MCF 10A (cell line): ENCODE measurements at regions of chr3 and their contacts with region 1.

Region 1: GRCh38 chr3:156816800-156817645 is 9.1 kb upstream of the LEKR1 start:
- DNase-seq: peak; percentile 86
- H3K4me3 Mint-ChIP-seq: peak overlapping the region; percentile 82
- H3K27ac Mint-ChIP-seq: peak overlapping the region; percentile 95
- H3K4me1 Mint-ChIP-seq: peaks cover 41% of the 10 kb centered on the region
- H3K27me3 Mint-ChIP-seq: no peaks in the 10 kb centered on the region
- CTCF ChIP-seq: no peak

Region 2: GRCh38 chr3:156681002-156681401 is 136.0 kb before region 1 on chr3:
- CTCF ChIA-PET with region 1: interaction called, 4 read pairs
- POLR2A ChIA-PET with region 1: interaction called, 103 read pairs
- intact Hi-C with region 1: loop called (anchors 1 kb)
- DNase-seq: peak; percentile 90
- H3K4me3 Mint-ChIP-seq: peak overlapping the region; percentile 43
- H3K27ac Mint-ChIP-seq: peak overlapping the region; percentile 91
- H3K4me1 Mint-ChIP-seq: peaks cover 56% of the 10 kb centered on the region
- H3K27me3 Mint-ChIP-seq: no peaks in the 10 kb centered on the region
- CTCF ChIP-seq: no peak

Region 3: DNA sequence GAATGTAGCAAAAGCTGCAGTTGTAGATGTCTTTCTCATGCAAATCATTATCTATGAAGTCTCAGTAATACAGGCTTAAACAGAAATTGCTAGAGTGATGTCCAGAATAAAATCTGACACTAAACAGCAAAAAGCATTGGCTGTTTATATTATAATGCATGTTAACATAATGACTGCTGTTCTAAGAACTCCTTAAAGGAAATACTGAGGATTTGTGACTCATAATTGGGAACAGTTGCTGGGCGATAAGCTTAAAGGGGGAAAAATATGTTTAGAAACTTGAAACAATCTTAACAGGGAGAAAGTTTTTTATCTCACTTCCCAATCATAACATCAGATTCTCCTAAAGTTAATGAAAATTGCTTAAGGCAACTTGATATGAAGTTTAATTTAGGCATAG is 125.1 kb before region 1 on chr3:
- CTCF ChIA-PET with region 1: no interaction called
- POLR2A ChIA-PET with region 1: interaction called, 12 read pairs
- intact Hi-C with region 1: loop called (anchors 5 kb)
- DNase-seq: peak; percentile 47
- H3K4me3 Mint-ChIP-seq: peak overlapping the region; percentile 66
- H3K27ac Mint-ChIP-seq: peak overlapping the region; percentile 57
- H3K4me1 Mint-ChIP-seq: peaks cover 47% of the 10 kb centered on the region
- H3K27me3 Mint-ChIP-seq: no peaks in the 10 kb centered on the region
- CTCF ChIP-seq: no peak

Region 4: GRCh38 chr3:156781310-156782230 is 35.5 kb before region 1 on chr3:
- CTCF ChIA-PET with region 1: interaction called, 4 read pairs
- POLR2A ChIA-PET with region 1: interaction called, 16 read pairs
- intact Hi-C with region 1: no loop called
- DNase-seq: peak; percentile 39
- H3K4me3 Mint-ChIP-seq: no peak overlapping the region
- H3K27ac Mint-ChIP-seq: peak overlapping the region; percentile 83
- H3K4me1 Mint-ChIP-seq: peaks cover 41% of the 10 kb centered on the region
- H3K27me3 Mint-ChIP-seq: no peaks in the 10 kb centered on the region
- CTCF ChIP-seq: no peak

Region 5: DNA sequence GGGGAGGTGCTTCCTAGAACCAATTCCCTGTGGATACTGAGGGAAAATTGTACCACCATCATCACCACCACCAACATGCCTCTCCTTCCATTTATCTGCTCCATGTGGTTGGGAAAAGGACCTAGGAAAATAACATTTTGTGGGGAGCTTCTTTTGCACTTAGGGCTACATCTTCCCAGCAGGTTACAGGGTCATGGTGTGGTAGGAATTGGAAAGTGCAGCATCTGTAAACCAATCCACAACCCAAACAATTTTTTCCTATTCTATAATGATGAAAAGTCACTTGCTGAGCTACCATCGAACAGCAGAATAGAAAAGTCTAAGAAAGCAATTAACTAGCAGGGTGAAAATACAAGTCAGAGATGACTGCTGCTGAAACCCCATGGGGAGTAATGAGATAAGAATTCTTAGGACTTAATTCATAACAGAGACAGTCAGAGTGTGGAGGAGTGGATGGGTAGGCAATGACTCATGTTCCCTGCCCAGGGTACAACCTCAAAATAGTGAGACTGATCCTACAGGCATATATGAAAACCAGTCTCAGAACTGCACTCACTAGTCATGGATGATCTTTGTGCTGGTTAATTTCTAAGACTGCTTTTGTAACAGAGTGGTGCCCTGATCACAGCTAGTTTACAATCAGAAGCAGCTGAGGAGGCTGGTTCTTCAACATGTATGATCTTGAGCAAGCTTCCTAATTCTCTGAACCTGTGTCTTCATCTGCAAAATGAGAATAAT is 28.9 kb before region 1 on chr3:
- CTCF ChIA-PET with region 1: interaction called, 4 read pairs
- POLR2A ChIA-PET with region 1: interaction called, 32 read pairs
- intact Hi-C with region 1: no loop called
- DNase-seq: peak; percentile 84
- H3K4me3 Mint-ChIP-seq: no peak overlapping the region
- H3K27ac Mint-ChIP-seq: peak overlapping the region; percentile 55
- H3K4me1 Mint-ChIP-seq: peaks cover 48% of the 10 kb centered on the region
- H3K27me3 Mint-ChIP-seq: no peaks in the 10 kb centered on the region
- CTCF ChIP-seq: no peak

Region 6: DNA sequence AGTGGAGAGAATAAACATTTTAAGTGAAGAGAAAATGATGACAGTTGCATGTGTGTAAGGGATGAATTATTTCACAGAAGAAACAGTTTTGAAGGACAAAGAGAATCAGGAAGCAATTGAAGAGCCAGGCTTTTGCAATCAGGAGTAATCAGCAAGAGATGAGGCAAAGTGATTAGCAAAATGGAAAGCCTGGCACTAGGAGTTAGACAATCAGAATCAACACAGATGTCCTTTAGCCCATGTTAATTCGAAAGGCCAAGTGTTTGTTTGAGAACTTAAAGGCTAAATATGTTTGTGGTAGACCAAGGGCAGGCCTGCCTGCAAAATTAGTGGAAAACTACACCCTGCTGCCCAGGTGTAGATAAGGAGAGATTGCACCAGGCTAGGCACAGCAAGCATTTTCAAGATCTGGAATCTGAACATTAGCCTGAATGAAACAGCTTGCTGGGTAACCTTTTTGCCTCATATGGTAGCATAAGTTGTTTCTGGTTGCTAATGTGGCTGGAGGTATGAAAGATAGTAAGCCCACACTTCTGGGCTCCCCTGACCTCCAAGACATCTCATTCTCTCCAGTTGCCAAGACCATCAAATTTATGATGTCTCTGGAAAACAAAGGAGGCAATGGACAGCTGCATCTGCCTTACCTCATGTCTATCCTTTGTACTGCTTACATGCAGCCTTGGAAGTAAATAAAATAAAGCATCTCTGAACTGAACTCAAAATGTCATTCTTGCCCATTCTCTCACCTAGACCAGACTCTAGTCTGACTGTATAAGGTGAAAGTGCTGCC is 12.9 kb before region 1 on chr3:
- CTCF ChIA-PET with region 1: interaction called, 3 read pairs
- POLR2A ChIA-PET with region 1: interaction called, 10 read pairs
- intact Hi-C with region 1: no loop called
- DNase-seq: no peak
- H3K4me3 Mint-ChIP-seq: no peak overlapping the region
- H3K27ac Mint-ChIP-seq: no peak overlapping the region
- H3K4me1 Mint-ChIP-seq: peaks cover 8% of the 10 kb centered on the region
- H3K27me3 Mint-ChIP-seq: no peaks in the 10 kb centered on the region
- CTCF ChIP-seq: no peak

Region 7: DNA sequence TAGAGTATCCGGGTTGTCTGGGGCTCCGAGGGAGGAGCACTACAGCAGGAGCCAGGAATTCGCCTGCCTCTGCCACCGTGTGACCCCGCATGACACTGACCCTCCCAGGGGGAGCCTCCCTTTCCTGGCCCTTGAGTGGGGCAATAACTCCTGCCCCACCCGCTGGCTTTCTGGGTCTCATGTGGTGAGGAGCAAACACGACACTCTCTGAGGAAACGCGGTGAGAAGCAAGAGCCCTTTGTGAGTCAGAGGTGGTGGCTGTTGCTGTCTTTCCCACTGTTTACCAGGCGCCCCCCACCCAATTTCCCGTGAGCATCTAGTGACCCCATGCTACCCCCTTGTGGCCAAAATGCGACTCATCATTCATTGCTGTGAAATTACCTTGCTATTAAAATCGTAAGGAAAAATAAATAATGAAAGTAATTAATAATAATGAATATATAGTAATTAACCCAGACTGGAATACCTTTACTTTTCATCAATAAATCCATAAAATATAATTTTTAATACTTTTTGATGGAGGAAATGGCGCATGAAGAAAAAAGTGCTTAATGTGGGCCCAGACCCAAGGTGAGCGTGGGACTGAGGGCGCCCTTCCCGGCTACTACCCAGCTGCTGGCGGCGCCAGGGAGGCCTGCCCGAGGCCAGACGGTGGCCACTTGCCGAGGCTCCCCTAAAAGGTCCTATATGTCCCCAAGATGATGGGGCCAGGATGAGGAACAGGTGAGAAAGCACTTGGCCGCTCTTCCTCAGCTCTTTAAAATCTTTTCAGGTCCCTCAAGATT is 313.6 kb after region 1 on chr3:
- CTCF ChIA-PET with region 1: interaction called, 3 read pairs
- POLR2A ChIA-PET with region 1: interaction called, 5 read pairs
- intact Hi-C with region 1: loop called (anchors 5 kb)
- DNase-seq: peak; percentile 80
- H3K4me3 Mint-ChIP-seq: peak overlapping the region; percentile 60
- H3K27ac Mint-ChIP-seq: peak overlapping the region; percentile 96
- H3K4me1 Mint-ChIP-seq: peaks cover 63% of the 10 kb centered on the region
- H3K27me3 Mint-ChIP-seq: no peaks in the 10 kb centered on the region
- CTCF ChIP-seq: peak; percentile 81